ENCODE measurements at regions of chr5 and their contacts with region 1.

Region 1: DNA sequence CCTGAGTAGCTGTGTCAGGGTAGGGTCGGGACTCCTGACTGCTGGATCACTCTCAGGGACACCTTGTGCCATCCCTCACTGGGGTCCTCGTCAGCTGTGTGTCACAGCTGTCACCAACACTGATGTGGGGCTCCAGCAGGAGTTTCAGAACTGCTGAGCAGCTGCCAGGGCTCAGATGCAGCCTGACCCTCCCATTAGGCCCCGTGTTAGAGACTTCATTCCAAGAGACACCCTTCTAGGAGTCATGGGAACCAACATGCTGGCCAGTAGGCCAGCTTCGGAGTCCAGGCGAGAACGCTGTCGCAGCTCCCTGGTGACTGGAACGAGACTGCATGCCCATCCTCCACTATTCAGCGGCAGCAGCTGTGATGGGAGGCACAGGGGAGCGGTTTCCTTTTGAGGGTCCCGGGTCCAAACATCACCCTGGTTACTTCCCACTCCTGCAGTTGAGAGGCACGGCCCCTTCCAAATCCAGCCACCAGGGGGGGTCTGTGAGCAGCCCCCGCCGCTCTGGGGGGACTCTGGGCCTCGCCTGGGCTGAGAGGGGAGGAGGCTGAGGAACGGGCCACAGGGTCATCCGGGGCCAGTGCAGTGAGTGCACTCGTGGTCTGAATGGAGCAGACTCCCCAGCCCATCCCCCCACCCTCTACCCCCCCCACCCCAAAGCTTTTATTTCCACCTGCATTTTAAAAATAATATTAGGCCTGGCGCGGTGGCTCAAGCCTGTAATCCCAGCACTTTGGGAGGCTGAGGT is 12.6 kb upstream of the TCF7 start:
- DNase-seq: peak; percentile 64
- H3K4me3 ChIP-seq: no peak overlapping the region
- H3K27ac ChIP-seq: no peak overlapping the region
- H3K4me1 ChIP-seq: peaks cover 22% of the 10 kb centered on the region
- CTCF ChIP-seq: peak; percentile 85

Region 2: GRCh38 chr5:134041570-134042411 is 60.1 kb before region 1 on chr5:
- CTCF ChIA-PET with region 1: interaction called, 3 read pairs
- POLR2A ChIA-PET with region 1: no interaction called
- intact Hi-C with region 1: loop called (anchors 2 kb)
- DNase-seq: no peak
- H3K4me3 ChIP-seq: no peak overlapping the region
- H3K27ac ChIP-seq: no peak overlapping the region
- H3K4me1 ChIP-seq: no peaks in the 10 kb centered on the region
- CTCF ChIP-seq: no peak

Region 3: GRCh38 chr5:134125039-134126015 is 23.5 kb after region 1 on chr5:
- CTCF ChIA-PET with region 1: no interaction called
- POLR2A ChIA-PET with region 1: no interaction called
- intact Hi-C with region 1: no loop called
- DNase-seq: no peak
- H3K4me3 ChIP-seq: no peak overlapping the region
- H3K27ac ChIP-seq: no peak overlapping the region
- H3K4me1 ChIP-seq: peaks cover 25% of the 10 kb centered on the region
- CTCF ChIP-seq: no peak

Region 4: GRCh38 chr5:134140530-134141201 is 38.8 kb after region 1 on chr5:
- CTCF ChIA-PET with region 1: interaction called, 4 read pairs
- POLR2A ChIA-PET with region 1: interaction called, 3 read pairs
- intact Hi-C with region 1: loop called (anchors 2 kb)
- DNase-seq: peak; percentile 76
- H3K4me3 ChIP-seq: no peak overlapping the region
- H3K27ac ChIP-seq: no peak overlapping the region
- H3K4me1 ChIP-seq: peaks cover 15% of the 10 kb centered on the region
- CTCF ChIP-seq: peak; percentile 86

Region 5: GRCh38 chr5:134145779-134146581 is 44.1 kb after region 1 on chr5:
- CTCF ChIA-PET with region 1: interaction called, 3 read pairs
- POLR2A ChIA-PET with region 1: no interaction called
- intact Hi-C with region 1: loop called (anchors 1 kb)
- DNase-seq: peak; percentile 75
- H3K4me3 ChIP-seq: no peak overlapping the region
- H3K27ac ChIP-seq: no peak overlapping the region
- H3K4me1 ChIP-seq: no peaks in the 10 kb centered on the region
- CTCF ChIP-seq: peak; percentile 85

Region 6: GRCh38 chr5:134511788-134512650 is 410.2 kb after region 1 on chr5:
- CTCF ChIA-PET with region 1: no interaction called
- POLR2A ChIA-PET with region 1: no interaction called
- intact Hi-C with region 1: no loop called
- DNase-seq: no peak
- H3K4me3 ChIP-seq: no peak overlapping the region
- H3K27ac ChIP-seq: no peak overlapping the region
- H3K4me1 ChIP-seq: no peaks in the 10 kb centered on the region
- CTCF ChIP-seq: no peak